MCF 10A (cell line): ENCODE measurements at regions of chr17 and their contacts with region 1.

Region 1: GRCh38 chr17:71438631-71439146 is 682.1 kb upstream of the SOX9 start:
- DNase-seq: peak; percentile 87
- H3K4me3 Mint-ChIP-seq: no peak overlapping the region
- H3K27ac Mint-ChIP-seq: peak overlapping the region; percentile 79
- H3K4me1 Mint-ChIP-seq: peaks cover 44% of the 10 kb centered on the region
- H3K27me3 Mint-ChIP-seq: no peaks in the 10 kb centered on the region
- CTCF ChIP-seq: no peak

Region 2: DNA sequence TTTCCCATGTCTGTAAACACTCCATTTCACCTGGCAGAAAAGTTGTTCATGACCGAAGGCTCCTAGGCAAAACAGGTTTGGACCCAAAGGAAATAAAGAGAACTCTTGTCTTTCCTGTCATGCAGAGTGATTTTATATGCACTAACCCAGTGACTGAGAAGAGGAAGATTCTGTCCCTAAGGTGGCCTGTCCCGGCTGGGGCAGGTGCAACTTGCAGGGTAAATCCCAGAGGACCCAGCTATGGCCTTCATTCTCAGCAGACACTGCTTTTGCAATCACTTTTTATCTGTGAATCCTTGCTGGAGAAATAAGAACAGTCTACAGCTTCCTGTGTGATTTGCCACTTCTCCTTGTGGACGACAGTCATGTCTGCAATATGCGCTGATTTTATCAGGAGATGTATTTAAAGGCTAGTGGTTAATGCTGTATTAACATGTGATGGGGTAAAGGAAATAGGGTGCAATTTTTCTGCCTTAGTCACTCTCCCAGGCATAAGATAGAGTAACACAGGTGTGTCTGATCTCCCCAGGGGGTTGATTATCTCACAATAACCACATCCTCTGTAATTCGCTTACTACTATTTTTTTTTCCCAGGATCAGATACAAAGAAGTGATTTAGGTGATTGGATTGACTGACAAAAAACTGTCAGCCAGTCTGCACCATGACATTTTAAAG is 14.7 kb before region 1 on chr17:
- CTCF ChIA-PET with region 1: no interaction called
- POLR2A ChIA-PET with region 1: interaction called, 10 read pairs
- intact Hi-C with region 1: no loop called
- DNase-seq: peak; percentile 86
- H3K4me3 Mint-ChIP-seq: no peak overlapping the region
- H3K27ac Mint-ChIP-seq: peak overlapping the region; percentile 57
- H3K4me1 Mint-ChIP-seq: peaks cover 15% of the 10 kb centered on the region
- H3K27me3 Mint-ChIP-seq: no peaks in the 10 kb centered on the region
- CTCF ChIP-seq: no peak